ENCODE measurements at regions of chrX and their contacts with region 1.

Region 1: DNA sequence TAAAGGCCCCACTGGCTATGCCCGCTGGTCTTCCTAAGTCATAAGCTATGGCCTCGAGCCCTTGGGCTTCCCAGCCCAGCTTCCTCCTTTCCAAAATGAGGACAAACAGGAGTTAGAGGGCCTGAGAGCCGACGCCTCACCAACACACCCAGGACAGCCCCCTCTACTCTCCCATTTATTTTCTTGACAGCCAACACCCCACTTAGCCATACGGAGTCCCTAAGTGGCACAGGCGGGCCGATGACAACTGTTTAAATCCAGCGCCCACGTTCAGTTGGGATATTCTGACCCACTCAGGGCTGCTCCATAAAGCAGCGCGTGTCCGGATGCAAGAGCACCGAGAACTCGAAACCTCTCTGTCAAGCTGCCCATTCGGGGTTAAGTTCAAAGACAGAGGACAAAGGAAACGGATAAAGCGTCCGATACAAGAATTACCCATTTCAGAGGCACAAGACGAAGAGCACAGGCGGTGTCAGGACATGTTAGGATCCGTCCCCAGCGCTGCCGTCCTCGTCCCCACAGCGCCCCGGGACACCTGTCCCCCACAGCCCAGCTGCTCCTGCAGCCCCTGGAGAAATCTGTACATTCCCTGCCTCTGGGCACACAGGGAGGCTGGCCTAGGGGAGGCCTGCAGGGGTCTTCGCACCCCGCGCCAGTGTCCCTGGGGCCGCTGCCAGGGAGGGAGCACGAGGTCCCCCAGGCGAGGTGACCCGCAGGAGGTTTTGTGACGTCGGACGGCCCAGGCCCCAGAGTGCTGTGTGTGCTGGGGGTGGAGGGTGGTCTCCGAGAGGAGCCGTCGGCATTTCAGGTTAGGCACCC is 1.2 kb downstream of the PRKX start:
- DNase-seq: peak; percentile 24
- ATAC-seq: no peak
- H3K4me3 Mint-ChIP-seq: peak overlapping the region; percentile 92
- H3K27ac Mint-ChIP-seq: peak overlapping the region; percentile 95
- H3K4me1 Mint-ChIP-seq: peaks cover 35% of the 10 kb centered on the region
- H3K27me3 Mint-ChIP-seq: no peaks in the 10 kb centered on the region

Region 2: GRCh38 chrX:3699821-3700381 is 12.4 kb before region 1 on chrX:
- CTCF ChIA-PET with region 1: interaction called, 3 read pairs
- POLR2A ChIA-PET with region 1: interaction called, 11 read pairs
- DNase-seq: no peak
- ATAC-seq: peak; percentile 20
- H3K4me3 Mint-ChIP-seq: peak overlapping the region; percentile 70
- H3K27ac Mint-ChIP-seq: peak overlapping the region; percentile 83
- H3K4me1 Mint-ChIP-seq: peaks cover 75% of the 10 kb centered on the region
- H3K27me3 Mint-ChIP-seq: no peaks in the 10 kb centered on the region

Region 3: DNA sequence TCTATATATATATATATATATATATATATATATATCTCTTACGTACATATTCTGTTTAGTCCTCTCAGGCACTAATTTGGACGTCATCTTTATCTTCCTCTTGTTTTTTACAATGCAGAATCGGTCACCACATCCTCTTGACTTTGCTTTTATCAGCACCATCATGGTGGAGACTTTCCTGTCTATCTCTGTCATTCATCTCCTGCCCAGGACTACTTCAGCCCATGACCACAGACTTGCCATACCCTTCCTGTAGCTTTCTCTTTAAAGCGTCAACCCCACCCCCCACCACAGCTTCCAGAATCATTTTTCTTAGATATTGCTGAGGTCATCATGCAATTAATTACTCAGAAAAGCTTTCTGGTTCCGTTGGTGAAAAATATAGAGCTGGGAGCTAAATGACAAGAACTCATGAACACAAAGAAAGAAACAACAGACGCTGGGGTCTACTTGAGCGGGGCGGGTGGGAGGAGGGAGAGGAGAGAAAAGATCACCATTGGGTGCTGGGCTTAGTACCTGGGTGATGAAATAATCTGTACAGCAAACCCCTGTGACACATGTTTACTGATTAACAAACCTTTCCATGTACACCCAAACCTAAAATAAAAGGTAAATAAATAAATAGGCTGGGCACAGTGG is 31.7 kb after region 1 on chrX:
- CTCF ChIA-PET with region 1: interaction called, 5 read pairs
- POLR2A ChIA-PET with region 1: interaction called, 10 read pairs
- DNase-seq: peak; percentile 78
- ATAC-seq: peak; percentile 88
- H3K4me3 Mint-ChIP-seq: peak overlapping the region; percentile 40
- H3K27ac Mint-ChIP-seq: peak overlapping the region; percentile 88
- H3K4me1 Mint-ChIP-seq: peaks cover 50% of the 10 kb centered on the region
- H3K27me3 Mint-ChIP-seq: no peaks in the 10 kb centered on the region

Region 4: DNA sequence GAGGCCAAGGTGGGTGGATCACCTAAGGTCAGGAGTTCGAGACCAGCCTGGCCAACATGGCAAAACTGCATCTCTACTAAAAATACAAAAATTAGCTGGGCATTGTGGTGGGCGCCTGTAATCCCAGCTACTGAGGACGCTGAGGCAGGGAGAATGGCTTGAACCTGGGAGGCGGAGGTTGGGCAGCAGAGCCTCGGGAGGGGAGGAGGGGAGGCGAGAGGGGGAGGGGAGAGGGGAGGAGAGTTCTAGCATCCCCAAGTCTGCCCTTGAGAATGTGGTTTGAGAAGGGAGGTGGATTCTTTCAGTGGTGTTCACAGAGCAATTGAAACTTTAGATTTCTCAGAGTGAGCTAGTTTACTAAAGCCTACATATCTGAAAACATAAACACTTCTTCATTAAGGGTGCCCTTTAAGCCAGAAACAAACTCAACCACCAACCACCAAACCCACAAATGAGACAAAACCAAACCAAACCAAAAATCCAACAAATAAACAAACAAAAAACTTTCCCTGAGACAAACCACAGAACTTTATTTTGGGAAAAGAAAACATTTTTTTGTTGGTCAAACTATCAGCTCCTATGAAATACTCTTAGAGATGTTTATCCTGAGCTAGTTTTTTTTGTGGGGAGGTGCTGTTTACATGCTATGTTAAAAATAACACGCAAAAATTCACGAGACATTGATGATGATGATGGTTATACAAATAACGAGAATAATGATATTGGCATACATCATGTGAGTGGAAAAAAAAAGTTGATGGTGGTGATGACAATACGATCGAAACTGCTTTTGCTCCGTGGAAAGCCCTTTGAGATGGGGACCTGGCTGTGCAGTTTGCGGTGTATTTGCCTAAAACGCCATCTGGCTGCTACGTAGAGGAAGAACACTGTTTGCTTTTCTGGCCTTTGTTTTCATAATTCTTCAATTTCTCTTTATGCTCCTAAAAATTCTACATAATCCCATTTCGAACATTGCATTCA is 99.4 kb after region 1 on chrX:
- CTCF ChIA-PET with region 1: interaction called, 10 read pairs
- POLR2A ChIA-PET with region 1: interaction called, 4 read pairs
- DNase-seq: peak; percentile 66
- ATAC-seq: no peak
- H3K4me3 Mint-ChIP-seq: peak overlapping the region; percentile 46
- H3K27ac Mint-ChIP-seq: peak overlapping the region; percentile 69
- H3K4me1 Mint-ChIP-seq: peaks cover 26% of the 10 kb centered on the region
- H3K27me3 Mint-ChIP-seq: peaks cover 25% of the 10 kb centered on the region